B cell (primary cell): ENCODE measurements at regions of chr6 and their contacts with region 1.

Region 1: DNA sequence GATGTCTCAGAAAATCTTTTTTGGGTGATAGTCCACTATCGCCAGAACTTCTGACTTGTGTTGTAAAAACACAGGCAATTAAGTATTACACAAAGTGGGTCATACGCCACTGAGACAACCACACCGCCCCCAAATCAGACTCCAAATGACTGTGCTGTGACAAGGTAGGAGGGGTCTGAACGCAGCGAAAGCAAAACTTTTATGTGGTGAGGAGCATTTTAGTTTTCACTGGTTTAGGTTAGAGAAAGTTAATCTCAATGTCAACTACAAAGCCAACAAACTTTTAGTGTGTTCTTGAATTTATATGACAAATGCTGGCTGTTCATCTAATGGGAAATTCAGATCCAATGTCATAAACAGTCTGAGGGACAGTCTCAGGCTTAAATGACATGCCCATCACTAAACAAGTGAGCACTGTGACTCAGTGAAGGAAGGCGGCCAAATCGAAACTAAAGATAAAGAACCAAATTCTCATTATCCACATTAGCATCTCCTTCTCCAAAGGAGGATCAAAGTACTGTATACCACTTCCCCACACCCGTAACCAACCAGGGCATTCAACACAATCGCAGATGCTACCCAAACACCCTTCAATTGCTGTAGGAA is 186.7 kb downstream of the GJA10 start:
- DNase-seq: peak; percentile 54
- ATAC-seq: peak; percentile 48
- H3K4me3 ChIP-seq: peak overlapping the region in 4 of 5 experiments; percentile 11 to 48 (median 40)
- H3K4me3 Mint-ChIP-seq: peak overlapping the region; percentile 90
- H3K27ac ChIP-seq: peak overlapping the region; percentile 4 to 52
- H3K27ac Mint-ChIP-seq: peak overlapping the region; percentile 90
- H3K4me1 ChIP-seq: peaks cover 61 to 72% of the 10 kb centered on the region in 2 donors
- H3K4me1 Mint-ChIP-seq: peaks cover 92% of the 10 kb centered on the region
- H3K27me3 ChIP-seq: no peaks in the 10 kb centered on the region
- H3K27me3 Mint-ChIP-seq: no peaks in the 10 kb centered on the region
- CTCF ChIP-seq: no peak

Region 2: GRCh38 chr6:89776583-89777233 is 304.3 kb before region 1 on chr6:
- CTCF ChIA-PET with region 1: no interaction called
- POLR2A ChIA-PET with region 1: no interaction called
- intact Hi-C with region 1: no loop called
- DNase-seq: no peak
- ATAC-seq: no peak
- H3K4me3 ChIP-seq: no peak overlapping the region
- H3K4me3 Mint-ChIP-seq: no peak overlapping the region
- H3K27ac ChIP-seq: no peak overlapping the region
- H3K27ac Mint-ChIP-seq: no peak overlapping the region
- H3K4me1 ChIP-seq: no peaks in the 10 kb centered on the region
- H3K4me1 Mint-ChIP-seq: no peaks in the 10 kb centered on the region
- H3K27me3 ChIP-seq: no peaks in the 10 kb centered on the region
- H3K27me3 Mint-ChIP-seq: no peaks in the 10 kb centered on the region
- CTCF ChIP-seq: no peak

Region 3: DNA sequence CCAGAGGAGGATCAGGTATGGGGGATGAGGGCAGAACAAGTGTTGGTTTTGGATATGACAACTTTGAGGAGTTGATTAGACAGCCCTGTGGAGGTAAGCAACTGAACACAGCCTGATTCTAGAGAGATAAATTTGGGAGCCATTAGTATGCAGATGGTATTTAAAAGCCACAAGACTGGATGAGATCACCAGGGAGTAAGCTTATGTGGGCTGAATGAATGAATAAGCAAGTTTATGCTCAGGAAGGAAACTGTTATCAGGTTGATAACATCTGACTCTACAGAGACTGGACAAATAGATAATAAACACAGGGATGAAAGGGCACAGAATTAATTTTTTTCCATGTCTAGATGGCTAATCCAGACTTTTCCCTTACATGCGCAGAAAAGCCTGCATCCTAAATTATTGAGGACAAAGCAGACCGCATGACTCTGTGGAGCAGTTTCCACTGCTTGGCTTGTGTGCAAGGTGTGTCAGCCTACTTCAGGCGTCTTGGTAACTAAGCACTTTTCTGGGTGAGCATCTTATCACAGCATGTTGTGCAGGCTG is 36.1 kb before region 1 on chr6:
- CTCF ChIA-PET with region 1: no interaction called
- POLR2A ChIA-PET with region 1: no interaction called
- intact Hi-C with region 1: loop called (anchors 5 kb)
- DNase-seq: no peak
- ATAC-seq: no peak
- H3K4me3 ChIP-seq: no peak overlapping the region
- H3K4me3 Mint-ChIP-seq: no peak overlapping the region
- H3K27ac ChIP-seq: no peak overlapping the region
- H3K27ac Mint-ChIP-seq: no peak overlapping the region
- H3K4me1 ChIP-seq: peaks cover 0 to 5% of the 10 kb centered on the region in 2 donors
- H3K4me1 Mint-ChIP-seq: peaks cover 25% of the 10 kb centered on the region
- H3K27me3 ChIP-seq: no peaks in the 10 kb centered on the region
- H3K27me3 Mint-ChIP-seq: no peaks in the 10 kb centered on the region
- CTCF ChIP-seq: no peak

Region 4: GRCh38 chr6:90103056-90103800 is 22.2 kb after region 1 on chr6:
- CTCF ChIA-PET with region 1: interaction called, 6 read pairs
- POLR2A ChIA-PET with region 1: interaction called, 4 read pairs
- intact Hi-C with region 1: loop called (anchors 1 kb)
- DNase-seq: peak; percentile 71
- ATAC-seq: peak; percentile 62
- H3K4me3 ChIP-seq: peak overlapping the region in 2 of 5 experiments; percentile 6 to 40
- H3K4me3 Mint-ChIP-seq: peak overlapping the region; percentile 89
- H3K27ac ChIP-seq: peak overlapping the region in 1 of 2 donors; percentile 78
- H3K27ac Mint-ChIP-seq: peak overlapping the region; percentile 87
- H3K4me1 ChIP-seq: peaks cover 81 to 86% of the 10 kb centered on the region in 2 donors
- H3K4me1 Mint-ChIP-seq: peaks cover 92% of the 10 kb centered on the region
- H3K27me3 ChIP-seq: no peaks in the 10 kb centered on the region
- H3K27me3 Mint-ChIP-seq: no peaks in the 10 kb centered on the region
- CTCF ChIP-seq: no peak

Region 5: DNA sequence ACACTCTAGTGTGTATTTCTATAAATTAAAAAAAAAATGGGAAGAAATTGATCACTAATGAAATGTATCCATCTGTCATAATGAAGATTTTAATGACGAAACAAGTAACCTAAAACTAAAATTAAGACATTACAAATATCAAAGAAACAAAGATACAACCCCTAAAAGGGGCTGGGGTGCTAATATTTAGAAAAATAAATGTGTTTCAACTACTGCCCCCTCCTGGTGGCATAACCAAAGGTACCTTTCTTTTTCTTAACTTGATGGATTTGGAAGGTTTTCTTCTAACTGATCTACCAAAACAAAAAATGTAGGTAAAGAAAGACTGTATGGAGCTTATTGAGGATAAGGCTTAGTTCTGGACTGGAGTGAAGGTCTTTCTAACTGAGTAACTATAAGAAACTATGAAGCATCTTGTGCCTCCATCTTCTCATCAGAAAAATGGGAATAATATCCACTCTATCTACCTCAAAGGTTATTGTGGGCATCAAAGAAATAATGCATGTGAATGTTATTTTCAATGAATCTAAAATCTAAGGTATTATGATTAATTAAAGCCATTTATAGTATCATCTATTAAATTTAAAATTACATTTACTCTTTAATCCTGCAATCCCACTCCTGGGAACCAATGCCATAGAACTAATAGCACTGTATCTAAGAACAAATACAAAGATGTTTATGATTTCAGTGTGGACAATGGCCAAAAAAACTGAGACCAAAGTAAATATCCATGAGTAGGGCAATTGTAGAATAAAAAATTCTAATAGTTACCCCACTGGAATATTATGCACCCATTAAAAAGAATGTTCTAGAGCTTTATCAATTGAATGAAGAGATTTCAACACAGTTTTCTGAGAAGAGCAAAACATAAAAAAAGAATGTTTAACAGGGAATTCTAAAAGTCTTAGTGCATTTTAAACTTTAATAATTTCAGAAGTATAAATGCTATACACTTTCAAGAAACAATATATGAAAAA is 98.5 kb after region 1 on chr6:
- CTCF ChIA-PET with region 1: interaction called, 15 read pairs
- POLR2A ChIA-PET with region 1: interaction called, 3 read pairs
- intact Hi-C with region 1: loop called (anchors 2 kb)
- DNase-seq: peak; percentile 49
- ATAC-seq: no peak
- H3K4me3 ChIP-seq: peak overlapping the region in 1 of 5 experiments; percentile 37
- H3K4me3 Mint-ChIP-seq: peak overlapping the region; percentile 79
- H3K27ac ChIP-seq: peak overlapping the region; percentile 61 to 91
- H3K27ac Mint-ChIP-seq: peak overlapping the region; percentile 81
- H3K4me1 ChIP-seq: peaks cover 56 to 64% of the 10 kb centered on the region in 2 donors
- H3K4me1 Mint-ChIP-seq: peaks cover 81% of the 10 kb centered on the region
- H3K27me3 ChIP-seq: no peaks in the 10 kb centered on the region
- H3K27me3 Mint-ChIP-seq: no peaks in the 10 kb centered on the region
- CTCF ChIP-seq: peak; percentile 73

Region 6: DNA sequence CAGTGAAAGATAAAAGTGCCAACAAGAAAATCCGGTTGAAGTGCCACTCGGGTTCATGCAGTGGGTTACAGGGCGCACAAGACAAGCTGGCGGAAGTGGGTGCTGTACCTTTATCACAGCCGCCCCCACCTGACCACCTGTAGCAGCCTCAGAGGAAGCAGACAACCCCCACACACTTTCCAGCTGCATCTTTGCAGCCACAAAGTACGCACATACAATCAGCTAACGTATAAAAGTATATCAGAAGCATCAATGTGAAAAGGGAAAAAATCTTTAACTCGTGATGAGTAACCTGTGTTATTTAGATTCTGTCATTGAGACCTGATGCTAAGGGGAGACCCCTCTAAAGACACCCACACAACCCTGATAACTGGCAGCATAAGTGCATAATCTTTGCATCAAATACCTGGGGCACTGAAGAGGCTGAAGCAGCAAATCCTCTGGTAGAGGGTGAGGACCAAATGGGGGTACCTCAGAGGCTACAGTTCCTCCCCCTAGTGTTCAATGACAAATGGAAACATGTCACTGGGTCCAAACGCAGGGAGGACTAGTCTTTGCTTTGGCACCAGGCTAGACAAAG is 193.6 kb after region 1 on chr6:
- CTCF ChIA-PET with region 1: no interaction called
- POLR2A ChIA-PET with region 1: interaction called, 3 read pairs
- intact Hi-C with region 1: loop called (anchors 5 kb)
- DNase-seq: peak; percentile 94
- ATAC-seq: peak; percentile 92
- H3K4me3 ChIP-seq: peak overlapping the region in 1 of 5 experiments; percentile 11
- H3K4me3 Mint-ChIP-seq: peak overlapping the region; percentile 59
- H3K27ac ChIP-seq: peak overlapping the region; percentile 95 to 97
- H3K27ac Mint-ChIP-seq: peak overlapping the region; percentile 87
- H3K4me1 ChIP-seq: peaks cover 55 to 75% of the 10 kb centered on the region in 2 donors
- H3K4me1 Mint-ChIP-seq: peaks cover 84% of the 10 kb centered on the region
- H3K27me3 ChIP-seq: no peaks in the 10 kb centered on the region
- H3K27me3 Mint-ChIP-seq: no peaks in the 10 kb centered on the region
- CTCF ChIP-seq: peak; percentile 34

Region 7: GRCh38 chr6:91276315-91276714 is 1195.3 kb after region 1 on chr6:
- CTCF ChIA-PET with region 1: no interaction called
- POLR2A ChIA-PET with region 1: no interaction called
- intact Hi-C with region 1: no loop called
- DNase-seq: no peak
- ATAC-seq: no peak
- H3K4me3 ChIP-seq: no peak overlapping the region
- H3K4me3 Mint-ChIP-seq: no peak overlapping the region
- H3K27ac ChIP-seq: no peak overlapping the region
- H3K27ac Mint-ChIP-seq: no peak overlapping the region
- H3K4me1 ChIP-seq: no peaks in the 10 kb centered on the region
- H3K4me1 Mint-ChIP-seq: no peaks in the 10 kb centered on the region
- H3K27me3 ChIP-seq: no peaks in the 10 kb centered on the region
- H3K27me3 Mint-ChIP-seq: no peaks in the 10 kb centered on the region
- CTCF ChIP-seq: no peak